Cardiac septum (tissue), 1 donor: ENCODE measurements at regions of chr3 and their contacts with region 1.

Region 1: DNA sequence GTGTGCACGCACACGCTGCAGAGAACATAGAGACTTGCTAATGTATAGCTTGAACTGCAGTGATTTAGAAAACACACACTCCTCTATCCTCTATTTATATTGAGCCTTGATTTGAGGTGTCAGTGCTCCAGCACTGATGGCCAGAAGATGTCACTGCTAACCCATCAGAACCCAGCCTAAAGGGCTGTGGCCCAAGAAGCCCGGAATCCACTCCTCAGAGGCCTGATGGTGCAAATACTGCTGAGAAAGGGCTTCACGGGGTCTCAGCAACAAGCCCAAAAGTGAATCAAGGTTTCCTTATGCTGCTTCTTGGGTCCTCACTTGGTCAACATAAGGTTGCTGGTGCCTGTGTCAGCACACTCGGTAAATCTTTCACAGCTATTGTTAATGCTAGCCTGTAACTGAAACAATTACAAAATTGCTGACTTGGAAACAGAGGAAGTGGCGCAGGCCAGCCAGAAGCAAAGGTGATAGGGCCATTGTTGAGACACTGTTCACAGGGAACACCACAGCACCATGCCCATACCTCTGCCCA is 60.3 kb downstream of the HEG1 start:
- DNase-seq: no peak

Region 2: GRCh38 chr3:124768812-124769211 is 226.7 kb before region 1 on chr3:
- intact Hi-C with region 1: loop called (anchors 5 kb)
- DNase-seq: no peak

Region 3: GRCh38 chr3:125042725-125043406 is 47.3 kb after region 1 on chr3:
- intact Hi-C with region 1: loop called (anchors 1 kb)
- DNase-seq: peak; percentile 87

Region 4: GRCh38 chr3:125141596-125142419 is 146.3 kb after region 1 on chr3:
- intact Hi-C with region 1: loop called (anchors 5 kb)
- DNase-seq: peak; percentile 89

Region 5: DNA sequence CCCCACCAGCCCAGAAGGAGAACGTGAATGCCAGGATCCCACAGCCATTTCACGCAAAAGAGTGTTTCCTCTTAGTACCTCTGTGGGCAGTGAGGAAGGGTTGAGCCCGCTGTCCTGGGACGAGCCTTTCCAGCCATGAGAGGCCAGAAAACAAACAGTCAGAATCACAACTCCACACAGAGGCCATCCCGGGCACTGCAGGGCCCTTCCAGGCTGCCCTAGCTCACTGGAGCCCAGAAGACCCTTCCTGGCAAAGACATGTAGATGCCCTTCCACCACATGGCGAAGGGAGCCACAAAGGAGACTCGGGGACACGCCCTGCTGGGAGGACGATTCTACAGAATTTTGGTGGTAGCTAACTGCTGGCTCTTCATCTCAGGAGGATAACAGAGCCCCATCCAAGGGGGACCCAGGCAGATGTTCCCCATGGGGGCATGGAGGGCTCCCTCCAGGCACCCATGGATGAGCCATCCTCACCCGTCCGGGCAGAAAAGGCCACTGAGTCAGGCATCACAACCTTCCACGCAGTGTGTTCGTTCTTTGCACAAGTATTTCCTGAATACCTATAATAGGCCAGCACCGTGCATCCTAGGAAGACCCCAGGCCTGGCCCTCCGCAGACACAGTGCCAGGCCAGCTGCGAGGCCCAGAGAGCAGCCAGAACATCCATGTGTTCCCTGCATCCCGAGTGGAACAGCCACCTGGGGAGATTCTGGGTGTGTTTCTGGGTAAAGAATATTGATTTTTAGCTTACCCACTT is 169.8 kb after region 1 on chr3:
- intact Hi-C with region 1: loop called (anchors 1 kb)
- DNase-seq: no peak

Region 6: DNA sequence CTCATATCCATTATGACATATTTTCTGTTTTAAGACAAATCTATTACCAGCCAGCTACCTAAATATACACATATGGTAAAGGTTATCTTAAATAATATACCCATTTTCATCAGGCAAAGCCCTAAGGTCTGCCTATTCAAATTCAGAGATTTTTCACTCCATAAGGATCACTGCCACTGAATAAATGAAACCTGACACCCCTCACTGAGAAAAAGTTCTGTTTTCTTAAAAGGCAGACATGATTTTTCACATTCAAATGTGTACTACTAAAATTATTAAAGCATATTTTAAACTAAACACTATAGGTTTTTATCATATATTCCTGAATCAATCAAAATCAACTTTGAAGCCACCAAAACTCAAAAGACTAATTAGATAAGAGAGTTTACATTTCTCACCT is 287.1 kb after region 1 on chr3:
- intact Hi-C with region 1: no loop called
- DNase-seq: no peak

Region 7: GRCh38 chr3:125374996-125375941 is 379.7 kb after region 1 on chr3 and contains the start of gene ZNF148:
- intact Hi-C with region 1: loop called (anchors 10 kb)
- DNase-seq: peak; percentile 98
- total RNA-seq, gene ZNF148: 44.2 TPM

Region 8: GRCh38 chr3:125437631-125438435 is 442.3 kb after region 1 on chr3:
- intact Hi-C with region 1: loop called (anchors 1 kb)
- DNase-seq: peak; percentile 69